OCI-LY7 (cell line): ENCODE measurements at regions of chr13 and their contacts with region 1.

Region 1: GRCh38 chr13:49786401-49787008 is 6.0 kb downstream of the KPNA3 start:
- DNase-seq: no peak
- H3K4me3 ChIP-seq: no peak overlapping the region
- H3K27ac ChIP-seq: no peak overlapping the region
- H3K4me1 ChIP-seq: peaks cover 19% of the 10 kb centered on the region
- CTCF ChIP-seq: no peak

Region 2: DNA sequence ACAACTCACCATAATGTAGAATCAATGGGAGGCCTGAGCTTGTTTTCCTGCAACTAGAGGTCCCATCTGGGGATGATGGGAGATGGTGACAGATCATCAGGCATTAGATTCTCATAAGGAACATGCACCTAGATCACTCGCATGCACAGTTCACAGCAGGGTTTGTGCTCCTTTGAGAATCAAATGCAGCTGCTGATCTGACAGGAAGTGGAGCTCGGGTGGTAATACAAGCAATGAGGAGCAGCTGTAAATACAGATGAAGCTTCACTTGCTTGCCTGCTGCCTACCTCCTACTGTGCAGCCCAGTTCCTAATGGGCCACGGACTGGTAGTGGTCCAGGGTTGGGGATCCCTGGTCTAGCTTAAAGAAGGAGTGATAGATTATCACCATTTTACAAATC is 27.0 kb before region 1 on chr13:
- CTCF ChIA-PET with region 1: no interaction called
- POLR2A ChIA-PET with region 1: interaction called, 12 read pairs
- intact Hi-C with region 1: no loop called
- DNase-seq: peak; percentile 53
- H3K4me3 ChIP-seq: no peak overlapping the region
- H3K27ac ChIP-seq: no peak overlapping the region
- H3K4me1 ChIP-seq: peaks cover 5% of the 10 kb centered on the region
- CTCF ChIP-seq: no peak

Region 3: GRCh38 chr13:50015258-50015657 is 228.8 kb after region 1 on chr13 and contains the start of gene KCNRG:
- CTCF ChIA-PET with region 1: no interaction called
- POLR2A ChIA-PET with region 1: no interaction called
- intact Hi-C with region 1: no loop called
- DNase-seq: no peak
- H3K4me3 ChIP-seq: no peak within 1 kb of the TSS
- H3K27ac ChIP-seq: no peak within 1 kb of the TSS
- H3K4me1 ChIP-seq: no peaks in the 10 kb centered on the region
- CTCF ChIP-seq: no peak
- total RNA-seq, gene KCNRG: 0.28 TPM in 1 of 2 replicates, not detected in the other